PC-3 (cell line): ENCODE measurements at regions of chr2 and their contacts with region 1.

Region 1: DNA sequence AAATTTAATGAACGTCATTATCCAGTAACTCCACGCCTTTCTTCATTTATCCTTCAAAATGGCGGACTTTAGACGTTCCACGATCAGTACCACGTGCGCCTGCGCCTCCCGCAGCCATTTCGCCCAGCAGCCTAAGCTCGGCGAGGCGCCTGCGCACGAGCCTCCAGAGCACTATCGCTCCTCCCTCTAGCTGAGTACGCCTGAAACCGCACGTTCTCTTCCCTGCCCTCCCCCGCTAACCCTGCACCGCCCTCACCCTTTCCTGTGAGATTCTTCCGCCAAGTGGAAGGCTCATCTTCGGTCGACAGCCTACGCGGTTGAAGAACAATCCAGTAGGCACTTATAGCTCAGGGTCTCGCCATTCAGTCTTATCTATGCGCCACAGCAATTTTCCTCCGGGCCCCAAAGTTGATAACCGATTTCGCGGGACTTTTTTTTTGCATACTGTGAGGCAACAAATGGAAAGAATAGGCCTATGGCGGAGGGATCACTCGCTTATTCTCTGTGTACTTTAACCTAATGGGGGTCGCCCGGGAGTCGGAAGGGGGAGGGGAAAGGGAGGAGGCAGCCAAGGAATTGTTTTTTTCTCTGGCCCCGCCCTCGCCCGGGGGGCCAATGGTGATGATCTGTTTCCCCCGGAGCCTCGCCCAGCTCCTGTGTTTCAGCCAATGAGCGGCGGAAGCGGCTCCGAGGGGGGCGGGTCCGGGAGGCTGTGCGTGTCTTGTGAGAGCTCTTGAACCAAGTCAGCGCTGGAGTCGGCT is at the start of gene KDM3A:
- DNase-seq: peak; percentile 99
- ATAC-seq: peak; percentile 84
- H3K4me3 ChIP-seq: peak within 1 kb of the TSS; percentile 81
- H3K27ac ChIP-seq: peak within 1 kb of the TSS; percentile 89
- H3K4me1 ChIP-seq: peaks cover 29% of the 10 kb centered on the region
- H3K27me3 ChIP-seq: no peaks in the 10 kb centered on the region
- CTCF ChIP-seq: no peak
- total RNA-seq, gene KDM3A: 32.2 and 59.6 TPM in 2 replicates

Region 2: DNA sequence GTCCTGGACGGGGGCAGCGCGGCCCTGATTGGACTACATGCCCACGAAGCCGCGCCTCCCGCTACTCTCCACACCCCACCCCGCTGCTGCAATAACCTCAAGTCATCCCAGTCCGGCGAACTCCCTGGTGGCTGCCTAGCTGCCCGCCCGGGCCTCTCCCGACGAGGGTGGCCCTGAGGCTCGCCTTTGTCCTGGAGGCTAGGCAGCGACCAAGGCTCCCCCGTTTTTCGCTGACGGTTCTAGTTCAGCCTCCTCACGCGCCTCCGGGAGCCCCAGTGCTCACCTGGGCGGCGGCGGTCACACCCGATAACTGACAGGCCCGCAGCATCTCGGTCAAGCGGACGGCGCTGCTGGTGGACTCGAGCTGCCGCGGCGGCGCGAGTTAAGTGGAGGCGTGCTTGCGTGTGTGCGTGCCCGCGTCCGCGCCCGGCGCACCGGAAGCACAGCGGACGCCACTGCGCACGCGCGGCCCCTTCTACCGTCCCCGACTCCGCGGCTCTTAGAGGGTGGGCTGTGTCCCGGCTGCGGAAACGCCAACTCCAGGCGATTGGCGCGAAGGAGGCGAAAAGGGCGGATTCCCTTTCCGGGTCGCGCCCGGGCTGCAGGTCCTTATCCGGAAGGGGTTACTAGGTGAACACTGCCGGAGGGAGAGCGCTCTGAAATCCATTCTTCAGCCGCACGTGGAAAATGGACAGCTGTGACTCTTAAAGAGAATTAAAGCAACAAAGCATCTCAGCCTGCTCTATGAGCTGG is 245.6 kb before region 1 on chr2 and contains the start of gene IMMT:
- CTCF ChIA-PET with region 1: no interaction called
- POLR2A ChIA-PET with region 1: no interaction called
- intact Hi-C with region 1: loop called (anchors 2 kb)
- DNase-seq: peak; percentile 97
- ATAC-seq: peak; percentile 91
- H3K4me3 ChIP-seq: peak within 1 kb of the TSS; percentile 90
- H3K27ac ChIP-seq: peak within 1 kb of the TSS; percentile 97
- H3K4me1 ChIP-seq: peaks cover 21% of the 10 kb centered on the region
- H3K27me3 ChIP-seq: no peaks in the 10 kb centered on the region
- CTCF ChIP-seq: no peak
- total RNA-seq, gene IMMT: 97.7 and 106 TPM in 2 replicates

Region 3: DNA sequence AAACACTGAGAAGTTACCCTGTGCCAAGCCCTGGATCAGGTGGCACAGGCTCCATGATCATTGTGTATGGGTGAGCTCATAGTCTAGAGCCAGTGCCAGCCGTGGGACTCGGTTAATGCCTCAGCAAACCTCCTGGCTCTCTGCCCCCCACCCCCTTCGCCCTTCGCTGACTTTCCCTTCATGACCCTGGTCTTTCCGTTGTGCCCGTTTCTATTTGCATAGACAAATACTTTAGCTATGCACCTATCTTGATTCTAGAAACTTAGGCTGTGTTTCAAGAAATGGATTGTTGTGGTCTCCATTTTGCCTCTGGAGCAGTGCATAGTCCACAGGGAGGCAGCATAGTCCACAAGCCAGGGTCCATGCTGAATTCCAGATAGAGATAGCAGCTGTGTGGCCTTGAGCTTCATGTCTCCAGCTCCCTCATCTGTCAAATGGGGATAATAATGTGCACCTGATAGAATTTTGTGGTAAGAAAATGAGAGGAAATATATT is 44.5 kb before region 1 on chr2:
- CTCF ChIA-PET with region 1: interaction called, 3 read pairs
- POLR2A ChIA-PET with region 1: no interaction called
- intact Hi-C with region 1: loop called (anchors 5 kb)
- DNase-seq: peak; percentile 65
- ATAC-seq: peak; percentile 82
- H3K4me3 ChIP-seq: peak overlapping the region; percentile 34; the same call in 1 of the 2 replicates
- H3K27ac ChIP-seq: no peak overlapping the region
- H3K4me1 ChIP-seq: peaks cover 13% of the 10 kb centered on the region
- H3K27me3 ChIP-seq: no peaks in the 10 kb centered on the region
- CTCF ChIP-seq: peak; percentile 78

Region 4: DNA sequence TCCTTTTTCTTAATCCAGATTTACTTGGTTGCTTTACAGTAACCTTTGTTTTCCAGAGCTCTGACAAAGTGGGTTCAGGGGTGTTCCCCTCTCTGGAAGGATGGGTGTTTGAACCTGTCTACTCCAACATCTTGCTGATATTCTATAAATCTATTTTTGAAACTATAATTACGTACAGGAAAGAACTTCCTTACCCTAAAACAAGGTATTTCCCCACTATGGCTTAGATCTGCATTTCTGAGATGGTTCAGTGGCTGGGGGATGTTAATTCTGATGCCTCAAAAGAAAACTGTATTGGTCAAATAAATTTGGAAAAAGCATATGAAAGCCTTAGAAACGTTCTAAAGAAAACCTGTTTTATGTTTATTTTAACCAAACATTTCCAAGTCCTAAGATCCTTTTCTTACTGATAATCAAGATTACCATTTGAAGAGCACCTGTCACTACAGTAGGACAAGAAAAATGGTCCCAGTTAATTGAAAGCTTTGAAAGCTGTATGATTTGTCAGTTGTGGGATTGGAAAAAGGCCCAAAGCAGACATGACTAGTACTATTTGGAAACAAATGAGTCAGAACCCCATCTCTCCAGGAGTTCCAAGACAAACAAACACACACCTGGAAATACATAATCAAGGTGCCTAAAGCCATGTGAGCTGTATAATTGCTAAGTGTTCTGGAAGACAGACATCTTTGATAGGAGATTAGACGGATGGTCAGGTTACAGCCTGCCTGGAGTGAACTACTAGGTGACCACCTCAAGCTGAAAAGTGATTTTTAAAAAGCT is 57.8 kb after region 1 on chr2:
- CTCF ChIA-PET with region 1: no interaction called
- POLR2A ChIA-PET with region 1: interaction called, 12 read pairs
- intact Hi-C with region 1: loop called (anchors 5 kb)
- DNase-seq: peak; percentile 93
- ATAC-seq: peak; percentile 95
- H3K4me3 ChIP-seq: no peak overlapping the region
- H3K27ac ChIP-seq: peak overlapping the region; percentile 81
- H3K4me1 ChIP-seq: peaks cover 16% of the 10 kb centered on the region
- H3K27me3 ChIP-seq: no peaks in the 10 kb centered on the region
- CTCF ChIP-seq: no peak